Naive thymus-derived CD4-positive, alpha-beta T cell (primary cell): ENCODE measurements at regions of chr2 and their contacts with region 1.

Region 1: GRCh38 chr2:96760036-96760985 is at the start of gene CNNM4:
- DNase-seq: peak; percentile 82 to 95 (median 91)
- ATAC-seq: peak; percentile 96
- H3K4me3 ChIP-seq: peak within 1 kb of the TSS; percentile 83
- H3K4me3 Mint-ChIP-seq: peak within 1 kb of the TSS; percentile 85 to 96 (median 89)
- H3K27ac ChIP-seq: peak within 1 kb of the TSS; percentile 81
- H3K27ac Mint-ChIP-seq: peak within 1 kb of the TSS; percentile 80 to 94 (median 90)
- H3K4me1 ChIP-seq: peaks cover 46 to 53% of the 10 kb centered on the region in 2 donors
- H3K4me1 Mint-ChIP-seq: peaks cover 41 to 57% (median 49%) of the 10 kb centered on the region in 7 donors
- H3K27me3 ChIP-seq: no peaks in the 10 kb centered on the region
- H3K27me3 Mint-ChIP-seq: no peaks in the 10 kb centered on the region
- total RNA-seq, gene CNNM4: 4.6 to 9.5 (median 5.5) TPM

Region 2: DNA sequence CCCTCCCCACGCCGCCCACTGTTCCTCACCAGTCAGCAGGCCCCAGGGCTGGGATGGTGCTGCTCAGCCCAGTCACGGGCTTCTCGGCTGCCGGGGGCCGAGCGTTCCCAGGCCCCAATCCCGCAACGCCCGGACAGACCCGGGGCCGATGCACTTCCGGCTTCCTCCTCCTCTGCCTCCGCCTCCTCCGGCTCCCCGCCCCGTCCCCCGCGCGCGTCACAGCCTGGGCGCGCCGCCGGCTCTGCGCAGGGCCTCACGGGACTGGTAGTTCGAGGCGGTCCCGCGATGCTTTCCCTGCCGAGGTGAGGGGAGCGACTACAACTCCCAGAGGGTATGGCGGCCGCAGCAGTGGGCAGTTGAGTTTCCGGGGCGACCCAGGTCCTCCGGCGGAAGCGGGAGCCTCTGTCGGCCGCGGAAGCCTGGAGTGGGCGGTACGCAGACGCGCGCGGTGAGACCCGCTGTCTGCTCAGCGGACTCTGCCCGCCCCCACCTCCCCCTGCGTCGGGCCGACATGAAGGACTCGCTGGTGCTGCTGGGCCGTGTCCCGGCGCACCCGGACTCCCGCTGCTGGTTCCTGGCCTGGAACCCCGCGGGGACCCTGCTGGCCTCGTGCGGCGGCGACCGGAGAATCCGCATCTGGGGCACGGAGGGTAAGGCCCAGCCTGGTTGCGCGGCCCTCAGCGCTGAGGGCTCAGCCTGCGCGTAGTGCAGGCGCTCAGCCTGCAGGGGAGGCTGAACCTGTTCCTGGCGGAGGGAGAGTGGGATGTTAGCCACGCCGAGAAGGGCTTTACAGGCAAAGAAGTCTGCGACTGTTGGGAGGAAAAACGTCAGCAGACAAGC is 494.3 kb before region 1 on chr2 and contains the starts of genes CIAO1 and TMEM127:
- CTCF ChIA-PET with region 1: no interaction called
- POLR2A ChIA-PET with region 1: interaction called, 4 read pairs
- intact Hi-C with region 1: loop called (anchors 1 to 10 kb)
- DNase-seq: peak; percentile 96 to 99 (median 97)
- ATAC-seq: peak; percentile 97
- H3K4me3 ChIP-seq: peak within 1 kb of the TSS; percentile 86
- H3K4me3 Mint-ChIP-seq: peak within 1 kb of the TSS; percentile 86 to 100 (median 96)
- H3K27ac ChIP-seq: peak within 1 kb of the TSS; percentile 96
- H3K27ac Mint-ChIP-seq: peak within 1 kb of the TSS; percentile 87 to 97 (median 96)
- H3K4me1 ChIP-seq: peaks cover 31 to 37% of the 10 kb centered on the region in 2 donors
- H3K4me1 Mint-ChIP-seq: peaks cover 38 to 61% (median 46%) of the 10 kb centered on the region in 7 donors
- H3K27me3 ChIP-seq: no peaks in the 10 kb centered on the region
- H3K27me3 Mint-ChIP-seq: no peaks in the 10 kb centered on the region
- total RNA-seq, gene CIAO1: 62.1 to 85.3 (median 71.6) TPM
- total RNA-seq, gene TMEM127: 33.7 to 69.0 (median 40.4) TPM

Region 3: DNA sequence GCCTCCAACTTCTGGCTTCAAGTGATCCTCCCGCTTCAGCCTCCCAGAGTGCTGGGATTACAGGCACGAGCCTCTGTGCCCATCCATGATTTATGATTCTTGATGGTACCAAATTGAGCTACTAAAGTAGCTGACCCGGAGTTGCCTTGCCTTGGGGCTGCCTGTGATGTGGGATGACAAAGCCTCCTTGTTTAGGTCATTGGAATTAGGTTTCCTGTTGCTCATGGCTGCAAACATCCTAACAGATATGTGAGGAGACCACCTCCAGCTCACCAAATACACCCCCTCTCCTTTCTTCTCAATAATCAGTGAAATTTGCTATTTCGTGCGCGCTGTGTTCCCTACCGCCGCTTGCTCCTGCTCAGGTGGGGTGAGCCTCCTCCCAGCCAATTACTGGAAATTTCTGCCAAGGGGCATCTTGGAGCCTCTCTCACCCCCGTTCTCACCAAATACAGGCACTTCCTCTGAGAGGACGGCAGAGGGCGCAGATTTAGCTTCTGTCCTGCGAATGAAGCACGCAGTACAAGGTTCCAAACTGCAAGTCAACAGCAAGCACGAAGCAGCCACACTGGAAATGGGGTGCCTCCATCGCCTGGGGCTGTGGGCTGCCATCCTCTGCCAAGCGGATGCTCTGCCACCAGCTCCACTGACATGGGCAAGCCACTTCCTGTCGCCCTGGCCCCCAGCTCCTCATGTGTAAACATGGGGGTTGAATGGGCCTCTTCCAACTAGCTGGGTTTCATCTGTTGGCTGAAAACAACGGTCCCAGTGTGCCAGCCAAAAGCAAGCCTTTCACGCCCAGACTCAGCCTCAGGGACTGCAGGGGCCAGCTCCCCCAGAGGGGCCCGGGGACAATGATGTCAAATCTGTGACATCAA is 353.0 kb before region 1 on chr2:
- CTCF ChIA-PET with region 1: no interaction called
- POLR2A ChIA-PET with region 1: no interaction called
- intact Hi-C with region 1: loop called in 1 of 2 experiments (anchors 1 kb)
- DNase-seq: peak; percentile 48 to 92 (median 88)
- ATAC-seq: peak; percentile 94
- H3K4me3 ChIP-seq: peak overlapping the region; percentile 49
- H3K4me3 Mint-ChIP-seq: peak overlapping the region; percentile 67 to 91 (median 83)
- H3K27ac ChIP-seq: peak overlapping the region; percentile 33
- H3K27ac Mint-ChIP-seq: peak overlapping the region; percentile 89 to 100 (median 96)
- H3K4me1 ChIP-seq: peaks cover 19 to 31% of the 10 kb centered on the region in 2 donors
- H3K4me1 Mint-ChIP-seq: peaks cover 18 to 51% (median 36%) of the 10 kb centered on the region in 7 donors
- H3K27me3 ChIP-seq: no peaks in the 10 kb centered on the region
- H3K27me3 Mint-ChIP-seq: no peaks in the 10 kb centered on the region

Region 4: DNA sequence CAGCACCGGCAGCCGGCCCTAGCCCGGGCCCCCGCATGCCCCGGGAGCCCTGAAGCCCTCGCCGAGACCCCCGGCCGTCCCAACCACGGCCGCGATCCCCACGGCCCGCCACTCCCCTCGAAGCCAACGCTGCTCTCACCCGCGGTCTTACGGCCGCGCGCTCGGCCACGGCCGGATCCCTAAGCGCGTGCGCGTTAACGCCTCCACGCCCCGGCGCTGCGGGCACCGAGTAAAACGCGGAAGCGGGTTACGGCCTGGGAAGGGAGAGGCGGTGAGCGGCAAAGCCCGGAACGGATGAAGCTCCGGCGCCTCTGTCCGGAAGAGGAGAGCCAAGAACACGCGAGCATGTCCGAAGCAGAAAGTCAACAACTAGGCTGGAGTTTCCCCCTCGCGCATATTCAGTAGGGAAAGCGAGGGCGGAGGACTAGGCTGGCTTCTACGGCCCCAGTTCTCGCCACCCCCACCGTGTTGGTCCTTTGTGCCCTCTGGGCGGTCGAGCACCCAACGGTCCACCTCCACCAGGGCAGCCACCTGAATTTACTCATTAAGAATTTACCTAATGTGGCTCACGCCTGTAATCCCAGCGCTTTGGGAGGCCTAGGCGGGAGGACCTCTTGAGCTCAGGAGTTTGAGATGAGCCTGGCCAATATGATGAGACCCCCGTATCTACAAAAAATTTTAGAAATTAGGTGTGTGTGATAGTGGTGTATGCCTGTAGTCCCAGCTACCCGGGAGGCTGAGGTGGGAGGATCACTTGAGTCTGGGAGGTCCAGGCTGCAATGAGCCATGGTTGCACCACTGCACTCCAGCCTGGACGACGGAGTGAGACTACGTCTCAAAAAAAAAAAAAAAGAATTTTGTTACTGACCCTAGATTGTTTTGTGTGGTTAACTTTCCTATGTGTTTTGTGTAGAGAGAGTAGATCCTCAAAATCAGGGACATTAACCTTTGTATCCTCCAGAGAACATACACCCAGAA is 121.9 kb before region 1 on chr2 and contains the start of gene KANSL3:
- CTCF ChIA-PET with region 1: interaction called, 3 read pairs
- POLR2A ChIA-PET with region 1: interaction called, 11 read pairs
- intact Hi-C with region 1: loop called (anchors 1 kb)
- DNase-seq: peak; percentile 81 to 96 (median 88)
- ATAC-seq: peak; percentile 93
- H3K4me3 ChIP-seq: peak within 1 kb of the TSS; percentile 97
- H3K4me3 Mint-ChIP-seq: peak within 1 kb of the TSS; percentile 89 to 96 (median 93)
- H3K27ac ChIP-seq: peak within 1 kb of the TSS; percentile 90
- H3K27ac Mint-ChIP-seq: peak within 1 kb of the TSS; percentile 87 to 95 (median 92)
- H3K4me1 ChIP-seq: peaks cover 18% of the 10 kb centered on the region in 2 donors
- H3K4me1 Mint-ChIP-seq: peaks cover 28 to 46% (median 39%) of the 10 kb centered on the region in 7 donors
- H3K27me3 ChIP-seq: no peaks in the 10 kb centered on the region
- H3K27me3 Mint-ChIP-seq: peaks cover 0 to 10% (median 0%) of the 10 kb centered on the region in 5 donors
- total RNA-seq, gene KANSL3: 54.0 to 65.0 (median 55.9) TPM

Region 5: GRCh38 chr2:96801005-96801785 is 40.9 kb after region 1 on chr2:
- CTCF ChIA-PET with region 1: interaction called, 12 read pairs
- POLR2A ChIA-PET with region 1: interaction called, 4 read pairs
- intact Hi-C with region 1: loop called (anchors 1 to 5 kb)
- DNase-seq: peak; percentile 41 to 72 (median 63)
- ATAC-seq: peak; percentile 94
- H3K4me3 ChIP-seq: no peak overlapping the region
- H3K4me3 Mint-ChIP-seq: no peak overlapping the region
- H3K27ac ChIP-seq: no peak overlapping the region
- H3K27ac Mint-ChIP-seq: no peak overlapping the region
- H3K4me1 ChIP-seq: peaks cover 10 to 20% of the 10 kb centered on the region in 2 donors
- H3K4me1 Mint-ChIP-seq: peaks cover under 1 to 4% (median 2%) of the 10 kb centered on the region in 7 donors
- H3K27me3 ChIP-seq: no peaks in the 10 kb centered on the region
- H3K27me3 Mint-ChIP-seq: no peaks in the 10 kb centered on the region

Region 6: GRCh38 chr2:96951093-96951654 is 190.9 kb after region 1 on chr2:
- CTCF ChIA-PET with region 1: no interaction called
- POLR2A ChIA-PET with region 1: no interaction called
- intact Hi-C with region 1: loop called in 1 of 2 experiments (anchors 1 kb)
- DNase-seq: peak; percentile 68 to 85 (median 80)
- ATAC-seq: peak; percentile 93
- H3K4me3 ChIP-seq: no peak overlapping the region
- H3K4me3 Mint-ChIP-seq: peak overlapping the region in 1 of 10 donors; percentile 61
- H3K27ac ChIP-seq: no peak overlapping the region
- H3K27ac Mint-ChIP-seq: peak overlapping the region in 6 of 9 donors; percentile 26 to 80 (median 61)
- H3K4me1 ChIP-seq: peaks cover 13 to 14% of the 10 kb centered on the region in 2 donors
- H3K4me1 Mint-ChIP-seq: peaks cover 14 to 40% (median 20%) of the 10 kb centered on the region in 7 donors
- H3K27me3 ChIP-seq: no peaks in the 10 kb centered on the region
- H3K27me3 Mint-ChIP-seq: peaks cover 0 to 2% (median 0%) of the 10 kb centered on the region in 5 donors

Region 7: GRCh38 chr2:97995734-97996624 is 1235.7 kb after region 1 on chr2 and contains the start of gene TMEM131:
- CTCF ChIA-PET with region 1: no interaction called
- POLR2A ChIA-PET with region 1: no interaction called
- intact Hi-C with region 1: loop called in 1 of 2 experiments (anchors 10 kb)
- DNase-seq: peak; percentile 89 to 98 (median 95)
- ATAC-seq: peak; percentile 93
- H3K4me3 ChIP-seq: peak within 1 kb of the TSS; percentile 90
- H3K4me3 Mint-ChIP-seq: peak within 1 kb of the TSS; percentile 85 to 98 (median 96)
- H3K27ac ChIP-seq: peak within 1 kb of the TSS; percentile 96
- H3K27ac Mint-ChIP-seq: peak within 1 kb of the TSS; percentile 86 to 95 (median 93)
- H3K4me1 ChIP-seq: peaks cover 14 to 17% of the 10 kb centered on the region in 2 donors
- H3K4me1 Mint-ChIP-seq: peaks cover 20 to 40% (median 38%) of the 10 kb centered on the region in 7 donors
- H3K27me3 ChIP-seq: no peaks in the 10 kb centered on the region
- H3K27me3 Mint-ChIP-seq: peaks cover 0 to 4% (median 0%) of the 10 kb centered on the region in 5 donors
- total RNA-seq, gene TMEM131: 39.7 to 46.4 (median 43.6) TPM